ENCODE measurements at regions of chr10 and their contacts with region 1.

Region 1: DNA sequence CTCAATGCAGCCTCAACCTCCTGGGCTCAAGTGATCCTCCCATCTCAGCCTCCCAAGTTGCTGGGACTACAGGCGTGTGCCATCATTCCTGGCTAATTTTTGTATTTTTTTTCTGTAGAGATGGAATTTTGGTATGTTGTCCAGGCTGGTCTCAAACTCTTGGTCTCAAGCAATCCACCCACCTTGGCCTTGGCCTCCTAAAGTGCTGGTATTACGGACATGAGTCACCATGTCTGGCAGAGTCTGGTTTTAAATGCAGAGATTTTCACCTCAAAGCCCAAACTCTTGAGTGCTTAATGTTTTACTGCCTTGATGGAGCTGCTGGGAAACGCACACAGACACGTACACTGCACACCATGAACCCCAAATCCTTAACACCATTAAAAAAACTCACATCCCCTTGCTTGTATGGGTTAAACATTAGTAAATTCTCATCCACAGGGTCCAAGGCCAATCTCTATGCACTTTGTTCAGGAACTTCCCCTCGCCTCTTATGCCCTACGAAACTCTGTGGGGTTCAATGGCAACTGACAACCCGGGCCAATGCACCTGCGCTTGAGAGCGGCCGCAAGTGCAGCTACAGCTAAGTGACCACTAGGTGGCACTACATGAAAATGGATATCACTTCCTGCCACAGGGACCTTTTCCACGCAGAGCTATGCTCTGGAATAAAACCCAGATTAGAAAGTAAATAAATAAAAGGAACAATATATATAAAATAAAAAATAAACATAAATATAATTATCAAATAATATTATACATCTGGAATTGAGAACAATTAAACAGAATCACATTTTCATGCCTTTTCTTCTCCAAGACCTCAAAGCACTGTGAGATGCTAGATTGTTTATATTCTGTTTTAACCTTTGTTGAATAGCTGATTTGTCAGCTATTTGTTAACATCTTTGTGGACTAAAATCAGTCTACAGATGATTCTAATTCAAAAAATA is 66.9 kb upstream of the AFAP1L2 start:
- DNase-seq: peak; percentile 45 to 87 (median 56)
- ATAC-seq: peak; percentile 84
- H3K4me3 ChIP-seq: no peak overlapping the region
- H3K4me3 Mint-ChIP-seq: peak overlapping the region; percentile 25
- H3K27ac ChIP-seq: peak overlapping the region; percentile 2 to 31
- H3K27ac Mint-ChIP-seq: peak overlapping the region; percentile 54
- H3K4me1 ChIP-seq: peaks cover 16% of the 10 kb centered on the region
- H3K4me1 Mint-ChIP-seq: peaks cover 52% of the 10 kb centered on the region
- H3K27me3 ChIP-seq: no peaks in the 10 kb centered on the region
- H3K27me3 Mint-ChIP-seq: no peaks in the 10 kb centered on the region
- CTCF ChIP-seq: peak; percentile 95

Region 2: DNA sequence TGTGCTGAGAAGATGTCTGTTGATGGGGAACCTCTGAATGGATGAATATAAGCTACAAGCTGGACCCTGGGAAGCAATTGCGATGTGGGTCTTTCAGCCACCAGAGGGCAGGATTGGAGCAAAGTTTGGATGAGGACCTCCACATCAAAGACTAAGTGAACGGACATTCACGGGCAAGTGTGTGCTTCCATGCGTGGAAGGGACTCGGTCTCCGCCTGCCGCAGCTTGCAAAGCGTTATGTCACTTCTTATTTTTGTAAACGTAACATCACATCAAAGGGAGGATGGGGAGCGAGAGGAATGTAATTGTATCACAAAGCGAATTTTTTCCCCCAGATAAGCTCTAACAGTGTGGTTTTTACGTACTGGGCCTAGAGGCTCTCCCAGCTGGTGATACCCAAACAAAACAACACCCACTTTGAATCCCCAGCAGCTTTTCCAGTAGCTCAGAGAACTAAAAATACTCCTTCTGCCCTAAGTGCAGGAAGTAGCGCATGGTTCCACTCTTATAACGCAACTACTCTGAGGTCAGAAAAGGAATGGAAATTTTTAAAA is 167.1 kb before region 1 on chr10:
- CTCF ChIA-PET with region 1: interaction called, 5 read pairs
- POLR2A ChIA-PET with region 1: interaction called, 6 read pairs
- intact Hi-C with region 1: loop called in 1 of 2 experiments (anchors 5 kb)
- DNase-seq: peak; percentile 28 to 78 (median 58)
- ATAC-seq: peak; percentile 24
- H3K4me3 ChIP-seq: peak overlapping the region; percentile 78
- H3K4me3 Mint-ChIP-seq: peak overlapping the region; percentile 86
- H3K27ac ChIP-seq: no peak overlapping the region
- H3K27ac Mint-ChIP-seq: peak overlapping the region; percentile 5
- H3K4me1 ChIP-seq: peaks cover 13% of the 10 kb centered on the region
- H3K4me1 Mint-ChIP-seq: peaks cover 12% of the 10 kb centered on the region
- H3K27me3 ChIP-seq: no peaks in the 10 kb centered on the region
- H3K27me3 Mint-ChIP-seq: no peaks in the 10 kb centered on the region
- CTCF ChIP-seq: peak; percentile 81

Region 3: GRCh38 chr10:114328874-114329273 is 142.4 kb before region 1 on chr10:
- CTCF ChIA-PET with region 1: no interaction called
- POLR2A ChIA-PET with region 1: no interaction called
- intact Hi-C with region 1: no loop called
- DNase-seq: no peak
- ATAC-seq: no peak
- H3K4me3 ChIP-seq: no peak overlapping the region
- H3K4me3 Mint-ChIP-seq: no peak overlapping the region
- H3K27ac ChIP-seq: no peak overlapping the region
- H3K27ac Mint-ChIP-seq: no peak overlapping the region
- H3K4me1 ChIP-seq: no peaks in the 10 kb centered on the region
- H3K4me1 Mint-ChIP-seq: no peaks in the 10 kb centered on the region
- H3K27me3 ChIP-seq: no peaks in the 10 kb centered on the region
- H3K27me3 Mint-ChIP-seq: no peaks in the 10 kb centered on the region
- CTCF ChIP-seq: no peak

Region 4: DNA sequence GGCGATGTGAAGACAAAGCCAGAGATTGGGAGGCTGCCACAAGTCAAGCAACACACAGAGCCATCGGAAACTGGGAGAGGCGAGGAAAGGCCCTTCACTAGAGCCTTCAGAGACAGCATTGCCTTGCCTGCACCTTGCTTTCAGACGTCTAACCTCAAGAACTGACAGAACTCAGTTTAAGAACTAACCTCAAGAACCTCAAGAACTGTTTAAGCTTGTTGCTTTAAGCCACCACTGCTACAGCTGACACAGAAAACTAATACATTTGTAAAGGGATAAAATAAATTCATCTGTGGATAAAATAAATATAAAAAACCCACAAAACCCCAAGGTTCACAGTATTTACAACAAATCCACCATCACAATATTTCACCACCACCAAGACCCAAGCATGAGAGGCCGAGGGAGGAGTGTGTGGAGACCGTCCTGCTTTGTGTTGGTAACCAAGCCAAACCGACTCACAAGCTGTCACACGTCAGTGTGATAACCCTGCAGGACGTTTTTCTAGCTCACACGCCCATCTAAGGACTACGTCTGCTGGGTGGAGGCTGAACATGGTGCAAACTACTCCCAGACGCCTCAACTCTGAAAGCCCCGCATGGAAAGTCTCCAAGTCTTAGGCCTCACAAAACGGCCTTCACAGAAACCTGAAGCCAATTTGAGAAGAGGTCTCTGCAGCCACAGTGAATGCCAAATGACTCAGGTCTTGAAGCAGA is 70.0 kb after region 1 on chr10:
- CTCF ChIA-PET with region 1: interaction called, 10 read pairs
- POLR2A ChIA-PET with region 1: interaction called, 6 read pairs
- intact Hi-C with region 1: no loop called
- DNase-seq: peak; percentile 58 to 93 (median 68)
- ATAC-seq: peak; percentile 76
- H3K4me3 ChIP-seq: peak overlapping the region; percentile 8
- H3K4me3 Mint-ChIP-seq: peak overlapping the region; percentile 50
- H3K27ac ChIP-seq: peak overlapping the region; percentile 86 to 92
- H3K27ac Mint-ChIP-seq: peak overlapping the region; percentile 96
- H3K4me1 ChIP-seq: peaks cover 92% of the 10 kb centered on the region
- H3K4me1 Mint-ChIP-seq: peaks cover 96% of the 10 kb centered on the region
- H3K27me3 ChIP-seq: no peaks in the 10 kb centered on the region
- H3K27me3 Mint-ChIP-seq: no peaks in the 10 kb centered on the region
- CTCF ChIP-seq: no peak

Region 5: GRCh38 chr10:114648368-114648767 is 177.1 kb after region 1 on chr10:
- CTCF ChIA-PET with region 1: no interaction called
- POLR2A ChIA-PET with region 1: no interaction called
- intact Hi-C with region 1: no loop called
- DNase-seq: no peak
- ATAC-seq: no peak
- H3K4me3 ChIP-seq: no peak overlapping the region
- H3K4me3 Mint-ChIP-seq: no peak overlapping the region
- H3K27ac ChIP-seq: no peak overlapping the region
- H3K27ac Mint-ChIP-seq: no peak overlapping the region
- H3K4me1 ChIP-seq: no peaks in the 10 kb centered on the region
- H3K4me1 Mint-ChIP-seq: no peaks in the 10 kb centered on the region
- H3K27me3 ChIP-seq: no peaks in the 10 kb centered on the region
- H3K27me3 Mint-ChIP-seq: no peaks in the 10 kb centered on the region
- CTCF ChIP-seq: no peak

Region 6: DNA sequence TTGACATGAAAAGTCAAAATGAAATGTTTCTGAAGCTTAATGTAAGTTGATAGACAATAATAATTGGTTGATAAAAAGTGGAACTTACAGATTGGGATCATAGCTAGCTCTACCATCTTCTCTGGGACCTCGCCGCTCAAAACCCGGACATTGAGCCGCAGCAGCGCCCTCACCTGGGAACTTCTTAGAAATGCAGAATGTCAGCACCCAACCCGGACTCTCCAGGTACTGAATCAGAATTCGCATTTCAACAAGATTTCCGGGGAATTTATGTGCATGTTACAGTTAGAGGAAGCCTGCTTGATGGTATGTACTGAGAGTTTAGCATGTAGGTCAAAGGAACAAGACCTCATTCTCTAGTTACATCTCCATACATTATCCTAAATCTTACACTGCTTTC is 223.5 kb after region 1 on chr10:
- CTCF ChIA-PET with region 1: no interaction called
- POLR2A ChIA-PET with region 1: no interaction called
- intact Hi-C with region 1: loop called (anchors 2 kb)
- DNase-seq: peak in 11 of 14 experiments; percentile 4 to 57 (median 18)
- ATAC-seq: peak; percentile 52
- H3K4me3 ChIP-seq: no peak overlapping the region
- H3K4me3 Mint-ChIP-seq: no peak overlapping the region
- H3K27ac ChIP-seq: no peak overlapping the region
- H3K27ac Mint-ChIP-seq: no peak overlapping the region
- H3K4me1 ChIP-seq: peaks cover 6% of the 10 kb centered on the region
- H3K4me1 Mint-ChIP-seq: peaks cover 11% of the 10 kb centered on the region
- H3K27me3 ChIP-seq: peaks cover 0 to 7% of the 10 kb centered on the region in 2 experiments
- H3K27me3 Mint-ChIP-seq: peaks cover 14% of the 10 kb centered on the region
- CTCF ChIP-seq: peak; percentile 15

Region 7: DNA sequence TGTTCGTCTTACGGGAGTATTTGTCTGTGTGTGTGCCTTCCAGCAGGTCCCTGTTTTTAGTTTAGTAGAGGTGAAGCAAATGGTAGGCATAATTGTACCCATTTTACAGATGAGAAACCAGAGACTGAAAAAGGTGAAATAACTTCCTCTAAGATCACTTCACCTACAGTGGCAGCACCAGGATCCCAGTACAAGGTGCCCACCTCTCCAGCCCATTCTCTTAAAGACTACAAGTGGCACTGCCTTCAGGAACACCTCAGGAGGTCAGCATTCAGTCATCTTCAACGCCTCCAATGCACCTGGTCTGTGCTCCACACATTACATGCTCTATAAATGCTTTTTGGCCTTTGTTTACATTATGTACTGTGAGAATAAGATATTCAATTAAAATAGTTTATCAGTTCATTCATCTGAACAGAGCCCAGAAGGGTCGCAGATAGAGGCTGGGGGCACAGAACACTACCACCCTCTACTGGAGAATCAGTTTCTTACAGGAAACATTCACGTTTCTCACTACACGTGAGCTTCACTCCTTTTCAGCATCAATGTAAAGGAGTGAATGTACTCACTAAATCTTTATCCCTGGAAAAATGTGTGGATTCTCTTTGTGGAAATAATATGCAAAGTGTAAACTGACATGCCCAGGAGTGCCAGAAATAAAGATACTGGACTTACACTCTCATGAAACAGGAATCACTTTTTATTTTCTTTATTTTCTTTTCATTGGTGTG is 232.3 kb after region 1 on chr10:
- CTCF ChIA-PET with region 1: interaction called, 4 read pairs
- POLR2A ChIA-PET with region 1: interaction called, 3 read pairs
- intact Hi-C with region 1: loop called in 1 of 2 experiments (anchors 1 kb)
- DNase-seq: peak in 7 of 14 experiments; percentile 3 to 53 (median 30)
- ATAC-seq: peak; percentile 80
- H3K4me3 ChIP-seq: no peak overlapping the region
- H3K4me3 Mint-ChIP-seq: no peak overlapping the region
- H3K27ac ChIP-seq: no peak overlapping the region
- H3K27ac Mint-ChIP-seq: no peak overlapping the region
- H3K4me1 ChIP-seq: no peaks in the 10 kb centered on the region
- H3K4me1 Mint-ChIP-seq: no peaks in the 10 kb centered on the region
- H3K27me3 ChIP-seq: no peaks in the 10 kb centered on the region
- H3K27me3 Mint-ChIP-seq: peaks cover 7% of the 10 kb centered on the region
- CTCF ChIP-seq: peak; percentile 67